ENCODE measurements at regions of chr7 and their contacts with region 1.

Region 1: DNA sequence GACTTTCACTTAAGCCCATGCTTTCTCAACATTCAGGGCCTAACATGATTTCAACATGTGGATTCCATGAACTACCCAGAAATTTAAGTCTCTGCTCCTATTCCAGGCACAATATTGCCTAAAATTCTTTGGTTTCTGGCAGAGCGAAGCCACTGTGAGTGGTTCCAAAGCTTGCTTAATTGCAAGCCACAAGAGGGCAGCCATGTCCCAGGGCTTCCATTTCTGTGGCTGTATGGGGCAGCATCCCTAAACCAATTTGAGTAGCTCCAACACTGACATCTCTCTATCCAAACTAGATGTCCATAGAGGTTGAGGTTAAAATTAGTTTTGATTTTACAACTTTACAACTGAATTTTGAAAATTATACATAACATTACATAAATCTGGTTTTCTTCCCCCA is 56.3 kb upstream of the MDFIC start:
- DNase-seq: peak; percentile 51 to 59
- H3K4me3 ChIP-seq: no peak overlapping the region
- H3K4me3 Mint-ChIP-seq: no peak overlapping the region
- H3K27ac Mint-ChIP-seq: no peak overlapping the region
- H3K4me1 ChIP-seq: no peaks in the 10 kb centered on the region
- H3K4me1 Mint-ChIP-seq: no peaks in the 10 kb centered on the region
- H3K27me3 ChIP-seq: no peaks in the 10 kb centered on the region
- H3K27me3 Mint-ChIP-seq: no peaks in the 10 kb centered on the region
- CTCF ChIP-seq: peak; percentile 65 to 69

Region 2: GRCh38 chr7:114922016-114922651 is 56.6 kb after region 1 on chr7 and contains the start of gene MDFIC:
- CTCF ChIA-PET with region 1: no interaction called
- POLR2A ChIA-PET with region 1: no interaction called
- intact Hi-C with region 1: loop called (anchors 5 kb)
- DNase-seq: peak in 1 of 2 experiments; percentile 51
- H3K4me3 ChIP-seq: peak within 1 kb of the TSS; percentile 47
- H3K4me3 Mint-ChIP-seq: peak within 1 kb of the TSS; percentile 85
- H3K27ac Mint-ChIP-seq: peak within 1 kb of the TSS; percentile 39
- H3K4me1 ChIP-seq: no peaks in the 10 kb centered on the region
- H3K4me1 Mint-ChIP-seq: peaks cover 3% of the 10 kb centered on the region
- H3K27me3 ChIP-seq: no peaks in the 10 kb centered on the region
- H3K27me3 Mint-ChIP-seq: no peaks in the 10 kb centered on the region
- CTCF ChIP-seq: no peak
- total RNA-seq, gene MDFIC: 2.7 and 4.2 TPM in 2 replicates

Region 3: DNA sequence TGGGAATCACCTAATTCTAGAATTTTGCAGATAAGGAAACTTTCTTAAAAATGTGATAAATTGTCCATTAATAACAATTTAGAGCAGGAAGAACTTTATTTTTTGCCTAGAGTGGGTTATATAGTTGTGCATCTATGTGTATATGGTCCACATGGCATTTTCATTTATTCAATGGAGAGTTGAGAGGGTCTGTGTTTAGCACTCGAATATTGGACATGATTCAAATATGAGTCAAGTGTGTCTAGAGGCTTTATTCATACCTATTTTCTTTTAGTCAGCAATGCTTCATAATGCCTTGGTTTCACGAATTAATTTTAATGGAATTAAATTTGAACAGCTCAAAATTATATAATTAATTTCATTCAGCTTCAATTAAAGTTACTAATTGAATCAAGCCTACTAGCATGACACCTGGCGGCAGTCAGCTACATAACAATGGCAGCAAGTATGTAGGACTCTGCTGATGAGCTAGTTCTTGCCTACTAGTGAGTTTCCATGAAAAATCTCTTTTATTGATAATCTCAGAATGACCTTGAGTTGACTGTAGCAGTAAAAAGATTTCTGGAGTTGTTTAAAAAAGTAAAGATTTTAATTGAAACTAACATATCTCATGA is 74.0 kb after region 1 on chr7:
- CTCF ChIA-PET with region 1: interaction called, 41 read pairs
- POLR2A ChIA-PET with region 1: no interaction called
- intact Hi-C with region 1: loop called (anchors 1 kb)
- DNase-seq: no peak
- H3K4me3 ChIP-seq: no peak overlapping the region
- H3K4me3 Mint-ChIP-seq: no peak overlapping the region
- H3K27ac Mint-ChIP-seq: no peak overlapping the region
- H3K4me1 ChIP-seq: no peaks in the 10 kb centered on the region
- H3K4me1 Mint-ChIP-seq: no peaks in the 10 kb centered on the region
- H3K27me3 ChIP-seq: no peaks in the 10 kb centered on the region
- H3K27me3 Mint-ChIP-seq: peaks cover 5% of the 10 kb centered on the region
- CTCF ChIP-seq: peak; percentile 28 to 41

Region 4: DNA sequence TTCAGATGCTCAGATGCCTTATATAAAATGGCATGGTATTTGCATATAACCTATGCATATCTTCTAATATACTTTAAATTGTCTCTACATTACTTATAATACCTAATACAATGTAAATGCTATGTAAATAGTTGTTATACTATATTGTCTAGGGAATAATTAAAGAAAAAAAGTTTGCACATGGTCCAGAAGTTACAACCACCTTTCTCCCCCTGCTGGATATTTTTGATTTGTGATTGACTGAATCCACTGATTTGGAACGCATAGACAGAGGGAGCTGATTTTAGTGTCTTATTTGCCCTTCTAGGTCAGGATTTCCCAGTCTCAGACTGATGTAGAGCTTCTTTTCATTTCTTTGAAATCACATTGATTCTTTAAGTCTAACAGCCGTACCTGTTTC is 88.2 kb after region 1 on chr7:
- CTCF ChIA-PET with region 1: interaction called, 4 read pairs
- POLR2A ChIA-PET with region 1: no interaction called
- intact Hi-C with region 1: loop called (anchors 1 kb)
- DNase-seq: no peak
- H3K4me3 ChIP-seq: no peak overlapping the region
- H3K4me3 Mint-ChIP-seq: no peak overlapping the region
- H3K27ac Mint-ChIP-seq: no peak overlapping the region
- H3K4me1 ChIP-seq: no peaks in the 10 kb centered on the region
- H3K4me1 Mint-ChIP-seq: no peaks in the 10 kb centered on the region
- H3K27me3 ChIP-seq: no peaks in the 10 kb centered on the region
- H3K27me3 Mint-ChIP-seq: peaks cover 3% of the 10 kb centered on the region
- CTCF ChIP-seq: no peak

Region 5: DNA sequence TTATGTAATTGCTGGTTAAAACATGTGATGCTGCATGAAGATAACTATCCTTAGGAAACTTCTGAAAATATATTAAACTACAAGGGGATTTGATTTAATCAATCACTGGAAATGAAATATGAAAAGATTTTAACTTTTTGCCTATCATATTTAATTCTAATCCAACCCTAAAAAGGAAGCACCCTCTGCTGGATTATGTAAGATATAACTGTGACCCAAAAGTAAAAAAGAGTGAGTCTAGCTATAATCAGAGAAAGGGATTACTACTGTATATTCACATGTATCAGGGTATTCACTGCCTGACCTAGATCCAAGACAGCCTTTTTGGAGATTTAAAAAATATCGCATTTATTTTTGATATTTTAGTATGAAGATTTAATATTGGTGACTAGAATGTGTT is 351.8 kb after region 1 on chr7:
- CTCF ChIA-PET with region 1: interaction called, 7 read pairs
- POLR2A ChIA-PET with region 1: no interaction called
- intact Hi-C with region 1: loop called (anchors 2 kb)
- DNase-seq: no peak
- H3K4me3 ChIP-seq: no peak overlapping the region
- H3K4me3 Mint-ChIP-seq: no peak overlapping the region
- H3K27ac Mint-ChIP-seq: no peak overlapping the region
- H3K4me1 ChIP-seq: no peaks in the 10 kb centered on the region
- H3K4me1 Mint-ChIP-seq: no peaks in the 10 kb centered on the region
- H3K27me3 ChIP-seq: no peaks in the 10 kb centered on the region
- H3K27me3 Mint-ChIP-seq: peaks cover 5% of the 10 kb centered on the region
- CTCF ChIP-seq: peak in 1 of 2 experiments; percentile 2

Region 6: GRCh38 chr7:115319536-115319935 is 454.0 kb after region 1 on chr7:
- CTCF ChIA-PET with region 1: no interaction called
- POLR2A ChIA-PET with region 1: no interaction called
- intact Hi-C with region 1: no loop called
- DNase-seq: no peak
- H3K4me3 ChIP-seq: no peak overlapping the region
- H3K4me3 Mint-ChIP-seq: no peak overlapping the region
- H3K27ac Mint-ChIP-seq: no peak overlapping the region
- H3K4me1 ChIP-seq: no peaks in the 10 kb centered on the region
- H3K4me1 Mint-ChIP-seq: no peaks in the 10 kb centered on the region
- H3K27me3 ChIP-seq: no peaks in the 10 kb centered on the region
- H3K27me3 Mint-ChIP-seq: peaks cover 10% of the 10 kb centered on the region
- CTCF ChIP-seq: no peak

Region 7: GRCh38 chr7:115475761-115476385 is 610.3 kb after region 1 on chr7:
- CTCF ChIA-PET with region 1: no interaction called
- POLR2A ChIA-PET with region 1: no interaction called
- intact Hi-C with region 1: loop called (anchors 10 kb)
- DNase-seq: no peak
- H3K4me3 ChIP-seq: no peak overlapping the region
- H3K4me3 Mint-ChIP-seq: no peak overlapping the region
- H3K27ac Mint-ChIP-seq: no peak overlapping the region
- H3K4me1 ChIP-seq: no peaks in the 10 kb centered on the region
- H3K4me1 Mint-ChIP-seq: peaks cover 6% of the 10 kb centered on the region
- H3K27me3 ChIP-seq: no peaks in the 10 kb centered on the region
- H3K27me3 Mint-ChIP-seq: peaks cover 20% of the 10 kb centered on the region
- CTCF ChIP-seq: peak in 1 of 2 experiments; percentile 26

Region 8: DNA sequence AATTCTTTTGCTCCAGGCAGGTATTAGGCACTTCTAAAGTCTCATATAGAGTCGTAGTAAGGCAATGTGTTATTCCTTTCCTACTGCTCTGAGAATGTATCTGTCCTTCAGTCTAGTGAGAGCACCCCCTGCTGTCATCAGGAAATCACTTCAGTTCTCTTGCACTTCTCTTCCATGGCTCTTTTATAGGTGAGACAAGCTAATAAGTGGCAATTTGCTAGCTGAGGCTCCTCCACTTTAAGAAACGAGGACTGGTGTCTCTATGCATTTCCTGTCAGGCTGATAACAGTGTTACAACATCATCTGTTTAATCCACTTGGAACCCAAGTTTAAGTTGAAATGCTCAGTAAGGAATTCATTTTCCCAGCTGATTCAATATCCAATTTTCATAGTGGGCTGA is 814.4 kb after region 1 on chr7:
- CTCF ChIA-PET with region 1: no interaction called
- POLR2A ChIA-PET with region 1: no interaction called
- intact Hi-C with region 1: loop called (anchors 5 kb)
- DNase-seq: peak in 1 of 2 experiments; percentile 55
- H3K4me3 ChIP-seq: no peak overlapping the region
- H3K4me3 Mint-ChIP-seq: no peak overlapping the region
- H3K27ac Mint-ChIP-seq: no peak overlapping the region
- H3K4me1 ChIP-seq: no peaks in the 10 kb centered on the region
- H3K4me1 Mint-ChIP-seq: peaks cover 7% of the 10 kb centered on the region
- H3K27me3 ChIP-seq: no peaks in the 10 kb centered on the region; the same call in 1 of the 2 replicates
- H3K27me3 Mint-ChIP-seq: no peaks in the 10 kb centered on the region
- CTCF ChIP-seq: peak; percentile 58 to 59